Esophagus muscularis mucosa (tissue), 4 donors: ENCODE measurements at regions of chr19 and their contacts with region 1.

Region 1: GRCh38 chr19:46661020-46661731 is at the start of gene DACT3:
- DNase-seq: peak; percentile 100
- H3K4me3 ChIP-seq: peak within 1 kb of the TSS; percentile 74 to 94 (median 80)
- H3K27ac ChIP-seq: peak within 1 kb of the TSS; percentile 93 to 97 (median 94)
- H3K4me1 ChIP-seq: peaks cover 20 to 54% (median 47%) of the 10 kb centered on the region in 4 donors
- H3K27me3 ChIP-seq: peaks cover 0 to 9% (median 0%) of the 10 kb centered on the region in 4 donors
- CTCF ChIP-seq: no peak
- EP300 ChIP-seq: no peak
- POLR2A ChIP-seq: no peak
- total RNA-seq, gene DACT3: 46.7 to 119 (median 65.1) TPM

Region 2: GRCh38 chr19:46529622-46530462 is 131.3 kb before region 1 on chr19:
- intact Hi-C with region 1: loop called (anchors 10 kb)
- DNase-seq: no peak
- H3K4me3 ChIP-seq: no peak overlapping the region
- H3K27ac ChIP-seq: no peak overlapping the region
- H3K4me1 ChIP-seq: peaks cover 0 to 15% (median 14%) of the 10 kb centered on the region in 4 donors
- H3K27me3 ChIP-seq: peaks cover 0 to 38% (median 4%) of the 10 kb centered on the region in 4 donors
- CTCF ChIP-seq: peak; percentile 91 to 94 (median 92)
- EP300 ChIP-seq: no peak
- POLR2A ChIP-seq: no peak

Region 3: GRCh38 chr19:46614114-46614722 is 47.0 kb before region 1 on chr19:
- intact Hi-C with region 1: loop called (anchors 1 kb)
- DNase-seq: peak; percentile 97
- H3K4me3 ChIP-seq: no peak overlapping the region
- H3K27ac ChIP-seq: peak overlapping the region in 1 of 4 donors; percentile 23
- H3K4me1 ChIP-seq: peaks cover 27 to 40% (median 36%) of the 10 kb centered on the region in 4 donors
- H3K27me3 ChIP-seq: no peaks in the 10 kb centered on the region
- CTCF ChIP-seq: peak; percentile 92 to 97 (median 93)
- EP300 ChIP-seq: no peak
- POLR2A ChIP-seq: no peak

Region 4: GRCh38 chr19:46704379-46705076 is 43.4 kb after region 1 on chr19:
- intact Hi-C with region 1: no loop called
- DNase-seq: peak; percentile 95
- H3K4me3 ChIP-seq: no peak overlapping the region
- H3K27ac ChIP-seq: no peak overlapping the region
- H3K4me1 ChIP-seq: peaks cover 0 to 8% (median 0%) of the 10 kb centered on the region in 4 donors
- H3K27me3 ChIP-seq: no peaks in the 10 kb centered on the region
- CTCF ChIP-seq: peak; percentile 93 to 98 (median 96)
- EP300 ChIP-seq: no peak
- POLR2A ChIP-seq: no peak